Activated B cell treated with CpG ODN at 0.5 μM for 24 hours (primary cell): ENCODE measurements at regions of chr6 and their contacts with region 1.

Region 1: DNA sequence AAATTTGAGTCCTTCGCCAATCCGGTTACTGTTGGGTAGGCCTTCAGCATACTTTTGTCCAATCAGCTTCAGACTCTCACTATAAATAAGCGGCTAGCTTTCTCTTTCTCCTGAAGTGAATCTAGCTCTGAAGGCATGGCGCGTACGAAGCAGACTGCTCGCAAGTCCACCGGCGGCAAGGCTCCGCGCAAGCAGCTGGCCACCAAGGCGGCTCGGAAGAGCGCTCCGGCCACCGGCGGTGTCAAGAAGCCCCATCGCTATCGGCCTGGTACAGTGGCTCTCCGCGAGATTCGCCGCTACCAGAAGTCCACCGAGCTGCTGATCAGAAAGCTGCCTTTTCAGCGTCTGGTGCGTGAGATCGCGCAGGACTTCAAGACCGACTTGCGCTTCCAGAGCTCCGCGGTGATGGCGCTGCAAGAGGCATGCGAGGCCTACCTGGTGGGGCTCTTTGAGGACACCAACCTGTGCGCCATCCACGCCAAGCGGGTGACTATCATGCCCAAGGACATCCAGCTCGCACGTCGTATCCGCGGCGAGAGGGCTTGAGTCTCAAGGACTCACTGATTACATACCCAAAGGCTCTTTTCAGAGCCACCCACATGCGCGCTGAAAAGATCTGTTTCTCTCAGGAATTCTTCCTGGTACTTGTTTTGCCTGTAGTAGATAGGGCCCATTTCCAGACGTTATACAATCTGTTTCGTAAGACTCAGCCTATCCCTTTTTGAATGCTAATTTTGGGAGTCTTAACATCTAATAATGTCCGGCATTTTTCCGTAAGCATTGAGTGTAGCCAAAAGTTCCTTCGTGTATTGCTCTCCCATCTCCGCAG is 102.0 kb downstream of the OR2B2 start:
- DNase-seq: peak; percentile 68
- ATAC-seq: peak; percentile 59
- H3K4me3 Mint-ChIP-seq: peak overlapping the region; percentile 93
- H3K27ac Mint-ChIP-seq: peak overlapping the region; percentile 97
- H3K4me1 Mint-ChIP-seq: peaks cover 59% of the 10 kb centered on the region
- H3K27me3 Mint-ChIP-seq: no peaks in the 10 kb centered on the region
- CTCF ChIP-seq: no peak

Region 2: DNA sequence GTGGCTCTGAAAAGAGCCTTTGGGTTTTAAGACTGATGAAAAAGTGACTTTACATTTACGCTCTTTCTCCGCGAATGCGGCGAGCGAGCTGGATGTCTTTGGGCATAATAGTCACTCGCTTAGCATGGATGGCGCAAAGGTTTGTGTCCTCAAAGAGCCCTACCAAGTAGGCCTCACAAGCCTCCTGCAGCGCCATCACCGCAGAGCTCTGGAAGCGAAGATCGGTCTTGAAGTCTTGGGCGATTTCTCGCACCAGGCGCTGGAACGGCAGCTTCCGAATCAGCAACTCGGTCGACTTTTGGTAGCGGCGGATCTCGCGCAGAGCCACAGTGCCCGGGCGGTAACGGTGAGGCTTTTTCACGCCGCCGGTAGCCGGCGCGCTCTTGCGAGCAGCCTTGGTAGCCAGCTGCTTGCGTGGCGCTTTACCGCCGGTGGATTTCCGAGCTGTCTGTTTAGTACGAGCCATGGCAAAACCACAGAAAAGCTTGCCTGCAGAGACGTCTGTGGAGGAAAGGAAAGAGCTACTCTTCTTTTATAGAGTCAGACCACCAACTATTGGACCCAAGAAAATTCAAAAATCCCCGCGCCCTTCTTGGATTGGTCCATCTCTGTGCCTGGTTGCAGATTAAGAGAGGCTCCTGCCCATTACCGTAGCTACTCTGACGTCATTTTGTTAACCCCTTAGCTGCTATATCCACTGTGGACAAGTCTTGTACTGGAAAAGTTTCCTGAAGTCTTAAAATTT is 1778.4 kb before region 1 on chr6:
- CTCF ChIA-PET with region 1: no interaction called
- POLR2A ChIA-PET with region 1: interaction called, 19 read pairs
- intact Hi-C with region 1: loop called (anchors 5 kb)
- DNase-seq: peak; percentile 55
- ATAC-seq: peak; percentile 62
- H3K4me3 Mint-ChIP-seq: peak overlapping the region; percentile 93
- H3K27ac Mint-ChIP-seq: peak overlapping the region; percentile 98
- H3K4me1 Mint-ChIP-seq: peaks cover 40% of the 10 kb centered on the region
- H3K27me3 Mint-ChIP-seq: peaks cover 2% of the 10 kb centered on the region
- CTCF ChIP-seq: no peak

Region 3: GRCh38 chr6:27138837-27139755 is 671.1 kb before region 1 on chr6:
- CTCF ChIA-PET with region 1: no interaction called
- POLR2A ChIA-PET with region 1: interaction called, 51 read pairs
- intact Hi-C with region 1: no loop called
- DNase-seq: peak; percentile 59
- ATAC-seq: peak; percentile 82
- H3K4me3 Mint-ChIP-seq: peak overlapping the region; percentile 97
- H3K27ac Mint-ChIP-seq: peak overlapping the region; percentile 98
- H3K4me1 Mint-ChIP-seq: peaks cover 62% of the 10 kb centered on the region
- H3K27me3 Mint-ChIP-seq: no peaks in the 10 kb centered on the region
- CTCF ChIP-seq: no peak

Region 4: GRCh38 chr6:27795697-27796494 is 14.3 kb before region 1 on chr6:
- CTCF ChIA-PET with region 1: interaction called, 26 read pairs
- POLR2A ChIA-PET with region 1: interaction called, 11 read pairs
- intact Hi-C with region 1: no loop called
- DNase-seq: no peak
- ATAC-seq: peak; percentile 60
- H3K4me3 Mint-ChIP-seq: no peak overlapping the region
- H3K27ac Mint-ChIP-seq: peak overlapping the region; percentile 50
- H3K4me1 Mint-ChIP-seq: peaks cover 21% of the 10 kb centered on the region
- H3K27me3 Mint-ChIP-seq: peaks cover 6% of the 10 kb centered on the region
- CTCF ChIP-seq: no peak

Region 5: DNA sequence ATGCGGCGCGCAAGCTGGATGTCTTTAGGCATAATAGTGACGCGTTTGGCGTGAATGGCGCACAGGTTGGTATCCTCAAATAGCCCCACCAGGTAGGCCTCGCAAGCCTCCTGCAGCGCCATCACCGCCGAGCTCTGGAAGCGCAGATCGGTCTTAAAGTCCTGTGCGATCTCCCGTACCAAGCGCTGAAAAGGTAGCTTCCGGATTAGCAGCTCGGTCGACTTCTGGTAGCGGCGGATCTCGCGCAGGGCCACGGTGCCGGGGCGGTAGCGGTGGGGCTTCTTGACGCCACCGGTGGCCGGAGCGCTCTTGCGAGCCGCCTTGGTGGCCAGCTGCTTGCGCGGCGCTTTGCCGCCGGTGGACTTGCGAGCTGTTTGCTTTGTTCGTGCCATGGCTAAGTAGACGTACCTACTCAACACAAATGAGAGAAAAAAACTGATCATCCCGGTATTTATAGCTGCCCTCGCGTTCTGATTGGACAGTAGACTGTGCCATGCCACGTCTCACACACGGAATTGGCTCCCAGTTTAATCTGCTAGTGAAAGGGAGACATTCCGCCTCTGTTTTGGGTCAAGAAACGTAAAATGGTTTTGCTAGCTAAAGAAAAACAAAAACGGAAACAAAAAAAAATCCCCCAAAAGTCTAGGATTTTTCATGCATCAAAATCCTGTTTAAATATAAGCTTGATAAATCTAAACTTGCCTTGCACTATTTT is 61.9 kb after region 1 on chr6:
- CTCF ChIA-PET with region 1: interaction called, 4 read pairs
- POLR2A ChIA-PET with region 1: interaction called, 149 read pairs
- intact Hi-C with region 1: loop called (anchors 1 kb)
- DNase-seq: peak; percentile 73
- ATAC-seq: peak; percentile 80
- H3K4me3 Mint-ChIP-seq: peak overlapping the region; percentile 94
- H3K27ac Mint-ChIP-seq: peak overlapping the region; percentile 95
- H3K4me1 Mint-ChIP-seq: peaks cover 36% of the 10 kb centered on the region
- H3K27me3 Mint-ChIP-seq: no peaks in the 10 kb centered on the region
- CTCF ChIP-seq: no peak